Right cardiac atrium (tissue), 5 donors: ENCODE measurements at regions of chr15 and their contacts with region 1.

Region 1: DNA sequence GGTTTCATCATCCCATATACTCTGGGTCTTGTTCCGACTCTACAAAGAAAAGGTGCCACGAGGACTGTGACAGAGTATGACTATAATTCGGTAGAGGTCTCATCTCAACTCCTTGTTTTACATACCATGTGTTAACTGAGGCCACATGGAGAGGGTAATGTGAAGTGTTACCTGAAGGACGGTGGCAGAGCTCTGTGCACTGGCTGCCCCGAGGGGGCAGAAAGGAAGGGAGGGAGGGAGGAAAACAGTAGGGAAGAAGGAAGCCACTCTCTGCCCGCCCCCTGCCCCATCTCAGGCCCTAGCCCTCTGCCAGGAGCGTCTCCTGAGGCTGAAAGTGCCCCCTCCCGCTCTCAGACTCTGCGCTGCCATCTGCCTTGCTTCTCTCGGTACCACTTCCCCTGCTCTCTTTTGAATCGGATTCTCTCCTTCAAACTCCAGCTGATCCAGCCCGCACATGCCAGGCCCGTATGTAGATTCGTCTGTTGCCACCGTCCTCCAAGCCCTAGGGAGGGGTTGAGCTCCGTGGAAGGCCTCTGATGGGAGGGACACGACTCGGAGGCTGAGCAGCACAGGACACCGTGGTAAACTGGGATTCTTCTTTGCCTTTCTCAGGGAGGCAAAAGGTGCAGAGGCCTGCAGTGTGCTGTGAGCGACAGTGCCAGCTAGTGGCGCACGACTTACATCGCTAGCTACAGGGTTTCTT is 70.5 kb upstream of the ATP10A start:
- DNase-seq: peak; percentile 81 to 92 (median 86)
- ATAC-seq: peak; percentile 94 to 95
- H3K4me3 ChIP-seq: peak overlapping the region; percentile 21
- H3K27ac ChIP-seq: no peak overlapping the region
- H3K4me1 ChIP-seq: no peaks in the 10 kb centered on the region
- H3K27me3 ChIP-seq: no peaks in the 10 kb centered on the region

Region 2: GRCh38 chr15:25693321-25694237 is 240.0 kb before region 1 on chr15:
- intact Hi-C with region 1: loop called in 1 of 4 experiments (anchors 5 kb)
- DNase-seq: peak; percentile 43 to 75 (median 73)
- ATAC-seq: peak; percentile 50 to 67
- H3K4me3 ChIP-seq: no peak overlapping the region
- H3K27ac ChIP-seq: no peak overlapping the region
- H3K4me1 ChIP-seq: no peaks in the 10 kb centered on the region
- H3K27me3 ChIP-seq: no peaks in the 10 kb centered on the region

Region 3: DNA sequence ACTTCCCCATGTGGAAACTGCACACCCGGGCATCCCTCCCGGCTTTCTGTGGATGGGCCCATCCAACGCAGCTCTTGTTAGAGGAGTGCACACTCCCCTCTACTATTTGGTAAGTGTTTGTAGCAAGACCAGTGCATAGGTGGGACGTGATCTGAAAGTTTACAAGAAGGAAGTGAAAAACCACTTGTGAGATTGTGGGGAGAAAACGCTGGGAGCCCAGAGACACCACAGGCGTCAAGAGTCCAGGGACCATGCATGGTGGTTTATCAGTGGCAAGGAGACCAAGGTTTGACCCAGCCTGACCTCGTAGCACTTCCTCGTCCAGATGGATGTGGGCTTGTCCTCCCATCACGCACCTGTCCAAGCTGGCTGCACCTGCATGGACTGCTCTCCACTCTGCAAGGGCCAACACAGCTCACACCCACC is 122.1 kb before region 1 on chr15:
- intact Hi-C with region 1: no loop called
- DNase-seq: peak in 1 of 3 donors; percentile 37
- ATAC-seq: no peak
- H3K4me3 ChIP-seq: no peak overlapping the region
- H3K27ac ChIP-seq: no peak overlapping the region
- H3K4me1 ChIP-seq: no peaks in the 10 kb centered on the region
- H3K27me3 ChIP-seq: no peaks in the 10 kb centered on the region

Region 4: GRCh38 chr15:25863111-25863967 is 70.3 kb before region 1 on chr15 and contains the start of gene ATP10A:
- intact Hi-C with region 1: loop called in 1 of 4 experiments (anchors 10 kb)
- DNase-seq: peak; percentile 47 to 82 (median 72)
- ATAC-seq: peak; percentile 53
- H3K4me3 ChIP-seq: peak within 1 kb of the TSS; percentile 52
- H3K27ac ChIP-seq: no peak within 1 kb of the TSS
- H3K4me1 ChIP-seq: no peaks in the 10 kb centered on the region
- H3K27me3 ChIP-seq: no peaks in the 10 kb centered on the region
- total RNA-seq, gene ATP10A: 1.5 to 3.0 (median 1.8) TPM

Region 5: DNA sequence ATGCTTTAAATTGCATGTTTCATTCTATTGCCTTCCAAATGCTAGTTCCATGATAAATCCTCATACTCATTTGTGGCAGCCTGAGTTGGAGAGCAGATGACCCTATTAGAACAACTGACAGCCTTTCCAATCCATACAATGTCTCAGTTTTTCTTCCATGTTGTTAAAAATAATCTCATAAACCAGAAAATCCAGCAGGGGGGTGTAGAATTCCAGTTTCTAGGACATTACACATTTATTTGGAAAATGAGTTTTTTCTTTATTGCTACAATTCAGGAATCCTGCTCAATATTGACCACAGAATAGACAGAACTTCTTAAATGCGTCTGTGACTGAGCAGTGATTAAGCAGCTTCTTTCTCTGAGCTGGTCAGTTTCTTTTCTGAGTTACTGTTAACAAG is 103.8 kb after region 1 on chr15:
- intact Hi-C with region 1: no loop called
- DNase-seq: no peak
- ATAC-seq: no peak
- H3K4me3 ChIP-seq: no peak overlapping the region
- H3K27ac ChIP-seq: no peak overlapping the region
- H3K4me1 ChIP-seq: no peaks in the 10 kb centered on the region
- H3K27me3 ChIP-seq: no peaks in the 10 kb centered on the region